Activated CD4-positive, alpha-beta T cell treated with anti-CD3 and anti-CD28 coated beads for 36 hours (primary cell): ENCODE measurements at regions of chr19 and their contacts with region 1.

Region 1: DNA sequence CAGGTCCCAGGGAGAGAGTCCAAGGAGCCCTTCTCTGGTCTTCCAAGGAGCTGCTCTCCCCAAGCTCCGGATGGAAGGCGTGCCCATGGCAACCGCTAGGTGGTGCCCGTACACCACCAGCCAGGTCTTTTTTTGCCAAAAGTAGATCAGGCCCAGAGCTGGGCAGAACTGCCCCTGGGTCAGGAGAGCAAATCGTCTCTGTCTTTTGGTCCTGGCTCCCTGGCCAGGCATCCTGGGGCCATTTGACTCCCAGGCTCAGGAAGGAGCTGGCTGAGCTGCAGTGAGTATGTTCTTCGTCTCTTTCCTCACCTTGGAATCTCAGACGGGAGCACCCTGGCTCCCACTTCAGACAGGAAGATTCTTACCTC is 24.6 kb upstream of the BCL3 start:
- DNase-seq: peak; percentile 88
- ATAC-seq: peak; percentile 89
- H3K4me3 Mint-ChIP-seq: no peak overlapping the region
- H3K27ac Mint-ChIP-seq: peak overlapping the region; percentile 51
- H3K4me1 Mint-ChIP-seq: peaks cover 33% of the 10 kb centered on the region
- H3K27me3 Mint-ChIP-seq: peaks cover 4% of the 10 kb centered on the region

Region 2: GRCh38 chr19:44587963-44588770 is 135.8 kb before region 1 on chr19:
- CTCF ChIA-PET with region 1: interaction called, 10 read pairs
- POLR2A ChIA-PET with region 1: no interaction called
- intact Hi-C with region 1: no loop called
- DNase-seq: peak; percentile 71
- ATAC-seq: peak; percentile 87
- H3K4me3 Mint-ChIP-seq: no peak overlapping the region
- H3K27ac Mint-ChIP-seq: peak overlapping the region; percentile 84
- H3K4me1 Mint-ChIP-seq: peaks cover 20% of the 10 kb centered on the region
- H3K27me3 Mint-ChIP-seq: peaks cover 6% of the 10 kb centered on the region

Region 3: GRCh38 chr19:44689056-44689895 is 34.7 kb before region 1 on chr19:
- CTCF ChIA-PET with region 1: interaction called, 36 read pairs
- POLR2A ChIA-PET with region 1: no interaction called
- intact Hi-C with region 1: loop called (anchors 1 to 5 kb)
- DNase-seq: peak; percentile 90
- ATAC-seq: peak; percentile 39
- H3K4me3 Mint-ChIP-seq: no peak overlapping the region
- H3K27ac Mint-ChIP-seq: no peak overlapping the region
- H3K4me1 Mint-ChIP-seq: peaks cover 42% of the 10 kb centered on the region
- H3K27me3 Mint-ChIP-seq: peaks cover 17% of the 10 kb centered on the region

Region 4: GRCh38 chr19:44737238-44738071 is 13.5 kb after region 1 on chr19:
- CTCF ChIA-PET with region 1: interaction called, 11 read pairs
- POLR2A ChIA-PET with region 1: no interaction called
- intact Hi-C with region 1: no loop called
- DNase-seq: no peak
- ATAC-seq: peak; percentile 37
- H3K4me3 Mint-ChIP-seq: no peak overlapping the region
- H3K27ac Mint-ChIP-seq: no peak overlapping the region
- H3K4me1 Mint-ChIP-seq: no peaks in the 10 kb centered on the region
- H3K27me3 Mint-ChIP-seq: no peaks in the 10 kb centered on the region

Region 5: DNA sequence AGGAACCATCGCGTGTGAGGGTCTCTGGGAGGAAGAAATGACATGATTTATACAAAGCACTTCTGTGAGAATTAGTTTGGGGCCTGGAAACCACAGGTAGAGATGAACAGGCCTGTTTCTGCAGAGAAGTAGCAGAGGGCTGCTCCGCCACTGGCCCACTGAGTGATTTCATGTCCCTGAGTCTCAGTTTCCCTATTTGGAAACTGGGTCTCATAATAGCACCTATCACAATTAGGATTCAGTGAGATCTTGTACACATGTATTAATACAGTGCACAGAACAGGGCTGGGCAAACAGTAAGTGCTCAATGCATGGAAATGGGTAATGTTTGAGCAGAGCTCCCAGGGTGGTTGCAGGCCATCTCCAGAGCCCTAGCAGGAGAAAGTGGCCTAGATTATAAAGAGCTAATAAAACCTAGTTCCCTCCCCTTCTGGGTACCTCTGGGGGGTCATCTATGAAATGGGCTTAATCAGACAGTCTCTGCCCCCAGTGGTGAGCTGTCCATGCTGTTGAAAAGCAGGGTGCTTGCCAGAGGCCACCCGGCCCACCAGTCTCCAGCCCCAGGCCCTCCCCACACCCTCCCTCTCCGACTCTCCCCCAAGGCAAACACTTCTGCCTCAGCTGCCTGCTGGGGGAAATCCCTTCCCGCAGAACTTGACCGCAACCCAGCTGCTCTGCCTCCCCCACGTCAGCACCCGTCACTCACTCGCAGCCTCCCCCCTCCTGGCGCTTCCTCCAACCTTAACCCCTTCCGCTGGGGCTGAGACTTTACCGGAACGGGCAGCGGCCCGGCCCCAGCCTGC is 29.1 kb after region 1 on chr19:
- CTCF ChIA-PET with region 1: interaction called, 16 read pairs
- POLR2A ChIA-PET with region 1: interaction called, 6 read pairs
- intact Hi-C with region 1: loop called in 1 of 2 experiments (anchors 1 kb)
- DNase-seq: peak; percentile 98
- ATAC-seq: peak; percentile 79
- H3K4me3 Mint-ChIP-seq: peak overlapping the region; percentile 94
- H3K27ac Mint-ChIP-seq: peak overlapping the region; percentile 97
- H3K4me1 Mint-ChIP-seq: peaks cover 54% of the 10 kb centered on the region
- H3K27me3 Mint-ChIP-seq: no peaks in the 10 kb centered on the region

Region 6: GRCh38 chr19:44777715-44778347 is 53.9 kb after region 1 on chr19 and contains the start of gene CBLC:
- CTCF ChIA-PET with region 1: interaction called, 288 read pairs
- POLR2A ChIA-PET with region 1: no interaction called
- intact Hi-C with region 1: no loop called
- DNase-seq: no peak
- ATAC-seq: peak; percentile 36
- H3K4me3 Mint-ChIP-seq: no peak within 1 kb of the TSS
- H3K27ac Mint-ChIP-seq: no peak within 1 kb of the TSS
- H3K4me1 Mint-ChIP-seq: no peaks in the 10 kb centered on the region
- H3K27me3 Mint-ChIP-seq: no peaks in the 10 kb centered on the region
- total RNA-seq, gene CBLC: not detected

Region 7: DNA sequence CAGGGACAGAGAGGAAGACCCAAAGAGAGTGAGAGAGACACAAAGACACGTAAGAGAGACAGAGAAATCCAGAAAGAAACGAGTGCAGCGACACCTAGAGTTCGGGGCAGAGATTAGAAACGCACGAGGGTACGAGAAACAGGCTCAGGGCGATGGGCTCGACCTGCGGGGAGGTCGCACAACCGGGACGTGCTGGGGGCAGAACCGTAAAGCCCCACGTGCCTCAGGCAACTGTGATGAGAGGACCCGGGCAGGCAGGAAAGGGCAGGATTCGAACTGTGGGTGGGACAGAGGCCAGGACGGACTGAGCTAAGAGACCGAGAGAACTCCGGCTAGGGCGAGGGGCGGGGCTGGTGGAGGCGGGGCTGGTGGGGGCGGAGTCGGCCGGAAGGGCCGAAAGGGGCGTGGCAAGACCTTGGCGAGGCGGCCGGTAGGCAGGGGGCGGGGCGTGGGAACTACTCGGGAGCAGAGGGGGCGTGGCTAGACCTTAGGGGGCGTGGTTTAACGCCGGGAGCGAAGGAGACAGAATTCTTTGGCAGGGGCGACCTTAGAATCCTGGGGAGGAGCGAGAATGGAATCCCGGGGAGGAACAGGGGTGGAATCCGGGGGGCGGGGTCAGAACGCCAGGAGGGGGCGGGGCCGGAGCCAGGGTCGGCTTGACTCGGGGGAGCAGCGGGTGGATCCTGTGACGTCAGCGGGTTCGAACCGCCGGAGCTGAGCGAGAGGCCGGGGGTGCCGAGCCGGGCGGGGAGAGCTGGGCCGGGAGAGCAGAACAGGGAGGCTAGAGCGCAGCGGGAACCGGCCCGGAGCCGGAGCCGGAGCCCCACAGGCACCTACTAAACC is 121.9 kb after region 1 on chr19 and contains the start of gene NECTIN2:
- CTCF ChIA-PET with region 1: interaction called, 10 read pairs
- POLR2A ChIA-PET with region 1: no interaction called
- intact Hi-C with region 1: loop called (anchors 1 kb)
- DNase-seq: peak; percentile 98
- ATAC-seq: peak; percentile 77
- H3K4me3 Mint-ChIP-seq: peak within 1 kb of the TSS; percentile 73
- H3K27ac Mint-ChIP-seq: peak within 1 kb of the TSS; percentile 10
- H3K4me1 Mint-ChIP-seq: peaks cover 21% of the 10 kb centered on the region
- H3K27me3 Mint-ChIP-seq: peaks cover 21% of the 10 kb centered on the region
- total RNA-seq, gene NECTIN2: 0.80 to 0.93 TPM